CD4-positive, alpha-beta memory T cell (primary cell): ENCODE measurements at regions of chr14 and their contacts with region 1.

Region 1: GRCh38 chr14:94485944-94486841 is 10.2 kb upstream of the SERPINA9 start:
- DNase-seq: peak in 4 of 5 donors; percentile 17 to 33 (median 26)
- H3K4me3 ChIP-seq: no peak overlapping the region
- H3K4me3 Mint-ChIP-seq: no peak overlapping the region
- H3K27ac ChIP-seq: no peak overlapping the region
- H3K27ac Mint-ChIP-seq: no peak overlapping the region
- H3K4me1 ChIP-seq: no peaks in the 10 kb centered on the region
- H3K4me1 Mint-ChIP-seq: peaks cover 0 to 5% (median 2%) of the 10 kb centered on the region in 4 donors
- H3K27me3 ChIP-seq: no peaks in the 10 kb centered on the region
- H3K27me3 Mint-ChIP-seq: peaks cover 16 to 19% of the 10 kb centered on the region in 2 donors

Region 2: DNA sequence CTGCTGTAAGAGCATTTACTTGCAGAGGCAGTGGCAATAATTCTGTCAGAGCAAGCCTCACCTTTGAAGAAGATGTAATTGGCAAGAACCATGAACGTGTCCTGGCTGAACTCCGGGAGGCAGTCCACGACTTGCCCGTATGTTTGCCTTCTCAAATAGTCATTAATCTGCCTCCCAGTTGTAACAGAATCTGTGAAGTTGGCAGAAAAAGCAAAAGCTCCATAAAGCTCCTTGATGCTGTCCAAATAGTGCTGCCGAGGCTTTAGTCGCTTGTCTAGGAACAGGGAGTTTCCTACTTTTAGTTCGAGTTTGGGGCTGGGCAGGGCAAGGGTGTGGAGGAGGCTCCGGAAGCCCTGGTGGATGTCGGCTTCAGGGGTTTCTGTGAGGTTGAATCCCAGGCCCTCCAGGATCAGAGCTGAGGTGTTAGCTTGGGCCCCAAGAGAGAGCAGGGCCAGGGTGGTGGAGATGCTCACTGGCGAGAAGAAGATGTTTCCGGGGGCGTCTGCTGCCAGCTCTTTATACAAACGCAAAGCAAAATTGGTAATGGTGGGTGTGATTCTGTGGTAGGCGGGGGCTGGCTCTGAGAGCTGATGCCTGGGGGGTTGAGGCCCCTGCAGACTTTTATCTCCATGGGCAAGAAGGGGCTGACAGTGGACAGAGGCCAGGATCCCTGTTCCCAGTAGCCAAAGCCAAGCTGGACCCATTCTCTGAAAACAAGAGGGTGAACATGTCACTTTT is 38.0 kb before region 1 on chr14:
- CTCF ChIA-PET with region 1: no interaction called
- POLR2A ChIA-PET with region 1: no interaction called
- intact Hi-C with region 1: no loop called
- DNase-seq: no peak
- H3K4me3 ChIP-seq: no peak overlapping the region
- H3K4me3 Mint-ChIP-seq: no peak overlapping the region
- H3K27ac ChIP-seq: no peak overlapping the region
- H3K27ac Mint-ChIP-seq: no peak overlapping the region
- H3K4me1 ChIP-seq: no peaks in the 10 kb centered on the region
- H3K4me1 Mint-ChIP-seq: peaks cover 0 to 1% (median under 1%) of the 10 kb centered on the region in 4 donors
- H3K27me3 ChIP-seq: no peaks in the 10 kb centered on the region
- H3K27me3 Mint-ChIP-seq: peaks cover 9 to 14% of the 10 kb centered on the region in 2 donors

Region 3: GRCh38 chr14:94458558-94459205 is 27.5 kb before region 1 on chr14:
- CTCF ChIA-PET with region 1: interaction called, 10 read pairs
- POLR2A ChIA-PET with region 1: no interaction called
- intact Hi-C with region 1: no loop called
- DNase-seq: no peak
- H3K4me3 ChIP-seq: no peak overlapping the region
- H3K4me3 Mint-ChIP-seq: no peak overlapping the region
- H3K27ac ChIP-seq: no peak overlapping the region
- H3K27ac Mint-ChIP-seq: no peak overlapping the region
- H3K4me1 ChIP-seq: no peaks in the 10 kb centered on the region
- H3K4me1 Mint-ChIP-seq: no peaks in the 10 kb centered on the region
- H3K27me3 ChIP-seq: no peaks in the 10 kb centered on the region
- H3K27me3 Mint-ChIP-seq: peaks cover 10 to 14% of the 10 kb centered on the region in 2 donors

Region 4: GRCh38 chr14:94476023-94476422 is 10.2 kb before region 1 on chr14 and contains the start of gene SERPINA9:
- CTCF ChIA-PET with region 1: interaction called, 13 read pairs
- POLR2A ChIA-PET with region 1: no interaction called
- intact Hi-C with region 1: no loop called
- DNase-seq: no peak
- H3K4me3 ChIP-seq: no peak within 1 kb of the TSS
- H3K4me3 Mint-ChIP-seq: no peak within 1 kb of the TSS
- H3K27ac ChIP-seq: no peak within 1 kb of the TSS
- H3K27ac Mint-ChIP-seq: no peak within 1 kb of the TSS
- H3K4me1 ChIP-seq: no peaks in the 10 kb centered on the region
- H3K4me1 Mint-ChIP-seq: no peaks in the 10 kb centered on the region
- H3K27me3 ChIP-seq: peaks cover 3% of the 10 kb centered on the region
- H3K27me3 Mint-ChIP-seq: peaks cover 5 to 12% of the 10 kb centered on the region in 2 donors
- total RNA-seq, gene SERPINA9: not detected

Region 5: GRCh38 chr14:94499673-94500072 is 13.5 kb after region 1 on chr14:
- CTCF ChIA-PET with region 1: interaction called, 19 read pairs
- POLR2A ChIA-PET with region 1: no interaction called
- intact Hi-C with region 1: no loop called
- DNase-seq: no peak
- H3K4me3 ChIP-seq: no peak overlapping the region
- H3K4me3 Mint-ChIP-seq: no peak overlapping the region
- H3K27ac ChIP-seq: no peak overlapping the region
- H3K27ac Mint-ChIP-seq: no peak overlapping the region
- H3K4me1 ChIP-seq: no peaks in the 10 kb centered on the region
- H3K4me1 Mint-ChIP-seq: no peaks in the 10 kb centered on the region
- H3K27me3 ChIP-seq: no peaks in the 10 kb centered on the region
- H3K27me3 Mint-ChIP-seq: peaks cover 5 to 10% of the 10 kb centered on the region in 2 donors

Region 6: GRCh38 chr14:94612174-94612573 is 126.0 kb after region 1 on chr14 and contains the start of gene SERPINA3:
- CTCF ChIA-PET with region 1: no interaction called
- POLR2A ChIA-PET with region 1: no interaction called
- intact Hi-C with region 1: no loop called
- DNase-seq: no peak
- H3K4me3 ChIP-seq: no peak within 1 kb of the TSS
- H3K4me3 Mint-ChIP-seq: no peak within 1 kb of the TSS
- H3K27ac ChIP-seq: no peak within 1 kb of the TSS
- H3K27ac Mint-ChIP-seq: no peak within 1 kb of the TSS
- H3K4me1 ChIP-seq: no peaks in the 10 kb centered on the region
- H3K4me1 Mint-ChIP-seq: no peaks in the 10 kb centered on the region
- H3K27me3 ChIP-seq: no peaks in the 10 kb centered on the region
- H3K27me3 Mint-ChIP-seq: peaks cover 2% of the 10 kb centered on the region in 2 donors
- total RNA-seq, gene SERPINA3: not detected